ENCODE measurements at regions of chr19 and their contacts with region 1.

Region 1: DNA sequence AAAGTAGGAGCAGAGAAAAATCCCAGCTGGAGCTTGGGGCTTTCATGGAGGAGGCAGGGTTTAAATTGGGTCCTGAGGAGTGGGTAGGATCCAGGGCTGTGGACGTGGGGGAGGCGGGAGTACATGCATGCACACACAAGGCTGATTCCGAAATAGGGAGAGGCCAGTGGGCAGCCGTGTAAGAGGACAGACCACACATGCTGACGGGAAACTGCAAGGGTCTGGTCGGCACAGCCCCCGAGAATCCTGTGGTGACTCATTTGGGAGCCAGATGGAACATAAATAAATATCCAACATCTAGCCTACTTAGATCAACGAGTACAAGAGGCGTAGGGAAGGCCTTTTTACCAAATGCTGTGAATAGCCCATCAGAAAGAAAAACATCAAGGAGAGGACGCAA is 216.3 kb upstream of the ZNF507 start:
- DNase-seq: peak in 4 of 5 donors; percentile 29 to 54 (median 36)
- H3K4me3 ChIP-seq: no peak overlapping the region
- H3K27ac ChIP-seq: no peak overlapping the region
- H3K4me1 ChIP-seq: peaks cover 2% of the 10 kb centered on the region
- H3K27me3 ChIP-seq: no peaks in the 10 kb centered on the region
- CTCF ChIP-seq: no peak
- EP300 ChIP-seq: no peak
- POLR2A ChIP-seq: no peak

Region 2: DNA sequence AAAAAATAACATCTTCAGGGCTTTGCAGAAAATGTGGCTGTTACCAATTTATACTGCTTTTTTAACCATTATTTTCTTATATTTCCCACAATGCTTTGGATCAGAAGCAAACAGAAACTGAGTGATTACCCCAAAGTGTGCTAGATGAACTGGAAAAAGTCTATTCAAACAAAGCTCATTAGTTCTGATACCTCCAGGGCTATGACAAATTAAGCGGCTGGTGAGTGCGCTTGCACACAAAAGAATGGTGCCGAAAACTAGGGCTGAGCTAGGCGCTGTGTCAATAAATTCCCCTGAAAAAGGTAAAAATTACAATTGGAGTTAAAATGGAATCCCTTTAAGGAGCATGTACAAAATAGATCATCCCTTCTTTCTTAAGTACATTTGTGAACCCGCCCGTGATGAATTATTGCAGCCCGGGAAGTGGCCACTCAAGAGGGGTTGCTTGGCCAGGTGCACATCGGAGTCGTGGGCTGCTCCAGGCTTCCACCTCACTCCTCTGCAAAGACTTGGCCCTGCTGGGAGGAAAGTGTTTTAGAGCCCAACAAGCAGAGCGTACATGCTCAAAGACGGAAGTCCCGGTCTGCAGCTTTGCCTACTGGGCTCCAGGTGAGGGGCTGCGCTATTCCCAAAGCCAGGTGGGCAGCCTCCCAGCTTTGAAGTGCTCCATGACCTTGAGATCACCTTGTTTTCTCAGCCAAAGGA is 52.2 kb after region 1 on chr19:
- intact Hi-C with region 1: loop called in 1 of 4 experiments (anchors 10 kb)
- DNase-seq: no peak
- H3K4me3 ChIP-seq: no peak overlapping the region
- H3K27ac ChIP-seq: no peak overlapping the region
- H3K4me1 ChIP-seq: no peaks in the 10 kb centered on the region
- H3K27me3 ChIP-seq: no peaks in the 10 kb centered on the region
- CTCF ChIP-seq: no peak
- EP300 ChIP-seq: no peak
- POLR2A ChIP-seq: no peak